Dendritic cell treated with granulocyte-macrophage colony-stimulating factor and Interleukin-4, amounts not matched to agents 40 ng/mL and 50 ng/mL, for 4 days (primary cell): ENCODE measurements at regions of chr1 and their contacts with region 1.

Region 1: DNA sequence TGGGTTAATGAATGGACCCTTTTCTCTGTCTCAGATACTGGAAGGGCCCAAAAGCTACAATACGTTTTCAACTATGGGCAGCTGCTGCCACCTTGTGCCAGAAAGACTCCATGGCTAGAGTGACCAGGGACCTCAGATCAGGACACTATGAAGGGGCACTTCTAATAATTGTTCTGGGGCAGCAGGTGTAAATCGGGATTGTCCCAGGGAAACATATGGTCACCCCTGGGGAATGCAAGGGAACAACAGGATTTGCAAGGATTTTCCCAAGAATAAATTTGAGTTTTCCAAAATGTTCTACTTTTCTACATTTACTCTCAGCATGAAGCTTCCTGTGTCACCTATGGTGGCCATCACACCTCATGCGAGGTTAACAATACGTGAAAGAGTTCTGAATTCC is 12.0 kb upstream of the FCAMR start:
- H3K4me3 Mint-ChIP-seq: no peak overlapping the region
- H3K27ac Mint-ChIP-seq: no peak overlapping the region
- H3K4me1 Mint-ChIP-seq: no peaks in the 10 kb centered on the region
- H3K27me3 Mint-ChIP-seq: peaks cover 27% of the 10 kb centered on the region

Region 2: DNA sequence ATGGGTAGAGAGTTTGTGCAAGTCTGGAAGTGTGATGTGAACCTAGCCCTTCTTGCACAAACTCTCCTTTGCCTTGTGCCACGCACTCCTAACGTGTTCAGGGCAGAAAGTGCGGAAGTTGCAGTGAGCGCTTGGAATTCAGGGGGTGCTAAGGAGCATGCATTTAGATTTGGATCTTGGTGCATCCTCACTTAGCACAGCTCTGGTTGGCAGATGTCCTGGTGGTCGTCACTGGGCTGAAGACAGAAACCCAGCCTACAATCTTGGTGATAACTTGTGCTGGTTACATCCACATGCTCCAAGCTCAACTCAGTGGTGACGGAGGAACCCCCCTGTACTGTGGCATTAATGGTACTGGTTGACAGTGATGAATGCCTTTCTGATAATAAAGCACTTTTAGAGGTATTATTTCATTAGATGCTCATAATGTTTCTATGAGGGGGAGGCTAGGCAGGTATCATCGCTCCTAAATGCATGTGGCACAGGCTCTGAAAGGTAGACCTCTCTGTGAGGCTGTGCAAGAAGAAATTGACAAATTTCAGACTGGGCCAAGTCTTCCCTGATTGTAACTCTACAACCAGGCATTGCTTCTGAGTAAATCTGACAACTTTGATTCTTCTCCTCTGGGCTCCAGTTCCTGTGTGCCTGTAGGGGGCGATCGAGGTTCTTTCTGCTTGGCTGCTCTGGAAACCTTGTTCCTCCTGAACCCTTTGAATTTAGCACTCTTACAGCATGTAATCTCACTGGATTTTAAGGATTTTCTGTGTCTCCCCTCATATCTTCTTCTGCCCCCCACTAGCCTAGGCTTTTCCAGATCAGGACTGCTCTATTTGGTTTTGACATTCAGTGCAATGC is 256.9 kb before region 1 on chr1:
- intact Hi-C with region 1: loop called (anchors 5 kb)
- H3K4me3 Mint-ChIP-seq: no peak overlapping the region
- H3K27ac Mint-ChIP-seq: no peak overlapping the region
- H3K4me1 Mint-ChIP-seq: peaks cover 78% of the 10 kb centered on the region
- H3K27me3 Mint-ChIP-seq: no peaks in the 10 kb centered on the region

Region 3: GRCh38 chr1:206808615-206809014 is 173.6 kb before region 1 on chr1:
- intact Hi-C with region 1: loop called (anchors 1 kb)
- H3K4me3 Mint-ChIP-seq: no peak overlapping the region
- H3K27ac Mint-ChIP-seq: no peak overlapping the region
- H3K4me1 Mint-ChIP-seq: peaks cover 18% of the 10 kb centered on the region
- H3K27me3 Mint-ChIP-seq: peaks cover 1% of the 10 kb centered on the region

Region 4: DNA sequence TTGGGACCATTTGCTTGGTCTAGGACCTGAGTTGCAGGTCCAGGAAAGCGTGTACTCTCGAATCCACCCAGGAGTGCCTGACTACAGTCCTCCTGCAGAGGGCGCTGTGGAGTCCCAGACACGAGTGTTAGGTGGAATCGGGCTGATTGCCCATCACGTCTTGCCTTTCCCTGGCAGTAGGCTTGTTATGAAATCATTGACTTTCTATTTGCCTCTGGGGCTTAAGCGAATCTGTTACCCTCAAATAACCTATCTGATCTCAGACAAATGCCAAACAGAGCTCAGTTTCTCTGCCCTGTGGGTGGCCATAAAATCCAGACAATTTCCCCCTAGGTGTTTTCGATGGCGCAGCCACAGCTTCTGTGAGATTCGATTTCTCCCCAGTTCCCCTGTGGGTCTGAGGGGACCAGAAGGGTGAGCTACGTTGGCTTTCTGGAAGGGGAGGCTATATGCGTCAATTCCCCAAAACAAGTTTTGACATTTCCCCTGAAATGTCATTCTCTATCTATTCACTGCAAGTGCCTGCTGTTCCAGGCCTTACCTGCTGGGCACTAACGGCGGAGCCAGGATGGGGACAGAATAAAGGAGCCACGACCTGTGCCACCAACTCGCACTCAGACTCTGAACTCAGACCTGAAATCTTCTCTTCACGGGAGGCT is 117.1 kb before region 1 on chr1 and contains the start of gene IL20:
- intact Hi-C with region 1: loop called (anchors 1 kb)
- H3K4me3 Mint-ChIP-seq: no peak within 1 kb of the TSS
- H3K27ac Mint-ChIP-seq: no peak within 1 kb of the TSS
- H3K4me1 Mint-ChIP-seq: peaks cover 2% of the 10 kb centered on the region
- H3K27me3 Mint-ChIP-seq: peaks cover 52% of the 10 kb centered on the region

Region 5: DNA sequence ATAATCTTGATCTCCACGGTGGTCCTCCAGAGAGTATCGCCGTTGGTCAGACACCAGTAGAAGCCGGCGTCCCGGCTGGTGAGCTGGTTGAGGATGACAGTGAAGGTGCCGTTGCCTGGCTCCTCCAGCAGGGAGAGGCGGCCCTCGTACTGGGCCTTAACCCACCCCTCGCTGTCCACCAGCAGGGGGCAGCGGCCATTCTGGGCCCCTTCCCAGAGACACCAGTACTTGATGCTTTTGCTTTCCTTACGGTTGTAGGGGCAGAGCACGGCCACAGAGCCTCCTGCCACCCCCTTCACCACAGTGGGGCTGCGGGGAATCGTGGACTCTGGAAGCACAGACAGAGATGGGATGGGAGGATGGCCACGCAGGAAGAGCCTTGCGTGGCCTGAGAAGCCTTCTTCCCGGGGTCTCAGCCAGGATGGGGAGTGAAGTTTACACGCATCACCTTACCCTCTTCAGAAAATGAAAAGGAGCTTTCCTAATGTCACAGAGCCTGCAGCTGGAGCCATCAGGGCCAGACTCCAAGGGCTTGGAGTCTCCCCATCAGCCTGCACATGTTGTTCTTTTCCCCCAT is 46.6 kb before region 1 on chr1:
- intact Hi-C with region 1: loop called (anchors 5 kb)
- H3K4me3 Mint-ChIP-seq: no peak overlapping the region
- H3K27ac Mint-ChIP-seq: no peak overlapping the region
- H3K4me1 Mint-ChIP-seq: peaks cover 29% of the 10 kb centered on the region
- H3K27me3 Mint-ChIP-seq: peaks cover 17% of the 10 kb centered on the region

Region 6: GRCh38 chr1:207052911-207053769 is 70.9 kb after region 1 on chr1 and contains the start of gene PFKFB2:
- intact Hi-C with region 1: no loop called
- H3K4me3 Mint-ChIP-seq: peak within 1 kb of the TSS; percentile 93
- H3K27ac Mint-ChIP-seq: peak within 1 kb of the TSS; percentile 89
- H3K4me1 Mint-ChIP-seq: peaks cover 30% of the 10 kb centered on the region
- H3K27me3 Mint-ChIP-seq: no peaks in the 10 kb centered on the region